ENCODE measurements at regions of chr14 and their contacts with region 1.

Region 1: GRCh38 chr14:61598980-61599379 is 96.3 kb upstream of the HIF1A start:
- DNase-seq: peak; percentile 34
- H3K4me3 Mint-ChIP-seq: peak overlapping the region; percentile 45
- H3K27ac Mint-ChIP-seq: peak overlapping the region; percentile 85
- H3K4me1 Mint-ChIP-seq: peaks cover 73% of the 10 kb centered on the region
- H3K27me3 Mint-ChIP-seq: no peaks in the 10 kb centered on the region

Region 2: GRCh38 chr14:61503167-61503801 is 95.7 kb before region 1 on chr14:
- intact Hi-C with region 1: loop called (anchors 1 kb)
- DNase-seq: peak; percentile 51
- H3K4me3 Mint-ChIP-seq: peak overlapping the region; percentile 76
- H3K27ac Mint-ChIP-seq: peak overlapping the region; percentile 99
- H3K4me1 Mint-ChIP-seq: peaks cover 94% of the 10 kb centered on the region
- H3K27me3 Mint-ChIP-seq: no peaks in the 10 kb centered on the region

Region 3: GRCh38 chr14:61561657-61562276 is 37.2 kb before region 1 on chr14:
- intact Hi-C with region 1: loop called (anchors 5 kb)
- DNase-seq: no peak
- H3K4me3 Mint-ChIP-seq: peak overlapping the region; percentile 37
- H3K27ac Mint-ChIP-seq: peak overlapping the region; percentile 27
- H3K4me1 Mint-ChIP-seq: peaks cover 70% of the 10 kb centered on the region
- H3K27me3 Mint-ChIP-seq: no peaks in the 10 kb centered on the region

Region 4: GRCh38 chr14:61620130-61620946 is 21.4 kb after region 1 on chr14:
- intact Hi-C with region 1: loop called (anchors 1 kb)
- DNase-seq: no peak
- H3K4me3 Mint-ChIP-seq: no peak overlapping the region
- H3K27ac Mint-ChIP-seq: peak overlapping the region; percentile 31
- H3K4me1 Mint-ChIP-seq: peaks cover 54% of the 10 kb centered on the region
- H3K27me3 Mint-ChIP-seq: no peaks in the 10 kb centered on the region

Region 5: GRCh38 chr14:61694830-61695694 is 96.1 kb after region 1 on chr14 and contains the start of gene HIF1A:
- intact Hi-C with region 1: loop called (anchors 1 kb)
- DNase-seq: peak; percentile 95
- H3K4me3 Mint-ChIP-seq: peak within 1 kb of the TSS; percentile 94
- H3K27ac Mint-ChIP-seq: peak within 1 kb of the TSS; percentile 97
- H3K4me1 Mint-ChIP-seq: peaks cover 63% of the 10 kb centered on the region
- H3K27me3 Mint-ChIP-seq: no peaks in the 10 kb centered on the region
- total RNA-seq, gene HIF1A: 241 and 247 TPM in 2 replicates

Region 6: DNA sequence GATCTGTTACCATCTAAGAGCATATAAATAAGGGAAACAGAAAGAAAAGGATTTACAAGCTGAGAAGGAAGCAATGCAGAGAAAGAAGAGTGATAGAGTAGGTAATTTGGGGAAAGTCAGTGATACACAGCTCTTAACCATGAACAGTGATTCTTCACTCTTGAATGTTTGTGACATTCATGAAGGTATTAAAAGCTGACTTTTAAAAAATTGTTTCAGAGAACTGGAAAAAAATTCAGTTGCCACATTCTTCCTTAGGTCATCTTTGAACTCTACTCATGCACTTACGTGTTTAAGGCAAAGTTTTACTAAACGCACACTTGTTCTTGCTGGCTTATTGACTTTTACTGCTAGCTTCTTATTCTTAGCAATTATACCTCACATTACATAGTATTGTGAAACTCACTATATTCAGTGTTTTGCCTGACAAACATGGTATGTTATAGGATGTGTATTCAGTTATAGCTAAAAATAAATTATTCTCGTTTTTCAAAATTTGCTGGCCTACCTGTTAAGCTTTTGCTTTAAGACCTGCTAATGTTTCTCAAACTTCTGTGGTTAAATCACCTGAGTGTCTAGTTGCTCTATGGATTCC is 107.2 kb after region 1 on chr14:
- intact Hi-C with region 1: no loop called
- DNase-seq: no peak
- H3K4me3 Mint-ChIP-seq: no peak overlapping the region
- H3K27ac Mint-ChIP-seq: peak overlapping the region; percentile 61
- H3K4me1 Mint-ChIP-seq: peaks cover 88% of the 10 kb centered on the region
- H3K27me3 Mint-ChIP-seq: no peaks in the 10 kb centered on the region

Region 7: GRCh38 chr14:62029569-62029924 is 430.6 kb after region 1 on chr14:
- intact Hi-C with region 1: no loop called
- DNase-seq: no peak
- H3K4me3 Mint-ChIP-seq: no peak overlapping the region
- H3K27ac Mint-ChIP-seq: no peak overlapping the region
- H3K4me1 Mint-ChIP-seq: no peaks in the 10 kb centered on the region
- H3K27me3 Mint-ChIP-seq: peaks cover 2% of the 10 kb centered on the region